ENCODE measurements at regions of chr14 and their contacts with region 1.

Region 1: GRCh38 chr14:75176142-75176820 is at the start of gene TMED10:
- DNase-seq: peak; percentile 87 to 95 (median 90)
- ATAC-seq: peak; percentile 95 to 97 (median 96)
- H3K4me3 ChIP-seq: peak within 1 kb of the TSS; percentile 70 to 99 (median 89)
- H3K27ac ChIP-seq: peak within 1 kb of the TSS; percentile 87 to 98 (median 96)
- H3K4me1 ChIP-seq: peaks cover 3 to 48% (median 25%) of the 10 kb centered on the region in 12 donors
- H3K27me3 ChIP-seq: no peaks in the 10 kb centered on the region
- CTCF ChIP-seq: peak in 2 of 12 donors; percentile 1 to 23
- POLR2A ChIP-seq: peak in 1 of 2 donors; percentile 36
- total RNA-seq, gene TMED10: 235 to 362 (median 275) TPM

Region 2: DNA sequence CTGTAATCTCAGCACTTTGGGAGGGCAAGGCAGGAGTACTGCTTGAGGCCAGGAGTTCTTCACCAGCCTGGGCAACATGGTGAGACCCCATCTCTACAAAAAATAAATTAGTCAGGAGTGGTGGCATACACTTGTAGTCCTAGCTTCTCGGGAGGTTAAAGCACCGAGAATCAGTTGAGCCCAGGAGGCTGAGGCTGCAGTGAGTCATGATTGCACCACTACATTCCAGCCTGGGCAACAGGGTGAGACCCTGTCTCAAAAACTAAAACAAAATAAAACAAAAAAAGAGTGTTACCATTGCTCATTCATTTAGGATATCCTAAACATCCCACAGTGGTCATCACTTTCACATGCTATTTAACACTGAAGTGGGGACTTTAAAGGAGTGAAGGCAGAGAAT is 57.2 kb before region 1 on chr14:
- intact Hi-C with region 1: no loop called
- DNase-seq: no peak
- ATAC-seq: no peak
- H3K4me3 ChIP-seq: no peak overlapping the region
- H3K27ac ChIP-seq: no peak overlapping the region
- H3K4me1 ChIP-seq: peaks cover 0 to 18% (median 1%) of the 10 kb centered on the region in 12 donors
- H3K27me3 ChIP-seq: no peaks in the 10 kb centered on the region
- CTCF ChIP-seq: no peak
- POLR2A ChIP-seq: no peak

Region 3: DNA sequence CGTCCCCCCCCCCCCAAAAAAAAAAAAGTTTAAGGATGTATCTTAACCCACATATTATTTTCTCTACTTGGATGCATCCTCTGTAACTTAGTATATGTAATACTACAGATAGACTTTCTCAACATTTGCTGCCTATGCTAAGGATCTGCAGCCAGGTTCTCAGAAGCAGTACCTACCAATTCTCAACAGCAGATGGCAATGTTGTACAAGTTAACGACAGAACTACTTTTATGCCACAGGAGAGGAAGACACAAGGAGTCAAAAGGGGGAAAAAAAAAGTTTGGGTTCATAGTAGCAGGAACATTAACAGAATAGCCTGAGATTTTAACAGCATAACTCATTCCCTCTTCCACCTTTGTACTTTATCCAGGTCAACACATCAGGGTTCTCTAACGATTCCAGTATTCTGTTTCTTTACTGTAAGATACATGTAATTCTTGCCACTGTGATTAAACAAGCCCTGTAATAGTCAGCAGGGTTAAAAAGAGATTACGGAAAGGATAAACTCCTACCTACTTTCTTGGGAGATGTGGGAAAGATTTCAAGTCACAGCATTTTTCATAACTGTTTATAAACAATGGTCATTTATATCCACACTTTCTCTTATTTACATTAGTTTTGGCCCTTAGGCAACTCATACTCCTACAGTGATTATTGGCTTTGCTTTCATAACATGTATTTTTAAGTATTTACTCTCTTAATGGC is 43.7 kb before region 1 on chr14:
- intact Hi-C with region 1: loop called in 3 of 10 experiments (anchors 5 kb)
- DNase-seq: peak in 2 of 5 donors; percentile 52 to 60
- ATAC-seq: peak in 3 of 4 donors; percentile 75 to 87 (median 81)
- H3K4me3 ChIP-seq: no peak overlapping the region
- H3K27ac ChIP-seq: peak overlapping the region in 3 of 12 donors; percentile 29 to 43 (median 33)
- H3K4me1 ChIP-seq: peaks cover 0 to 19% (median 11%) of the 10 kb centered on the region in 12 donors
- H3K27me3 ChIP-seq: no peaks in the 10 kb centered on the region
- CTCF ChIP-seq: peak; percentile 60 to 83 (median 71)
- POLR2A ChIP-seq: no peak

Region 4: GRCh38 chr14:75230140-75231045 is 54.1 kb after region 1 on chr14:
- intact Hi-C with region 1: loop called in 3 of 10 experiments (anchors 5 to 10 kb)
- DNase-seq: peak in 2 of 5 donors; percentile 39 to 76
- ATAC-seq: peak in 3 of 4 donors; percentile 25 to 34 (median 29)
- H3K4me3 ChIP-seq: no peak overlapping the region
- H3K27ac ChIP-seq: peak overlapping the region in 6 of 12 donors; percentile 6 to 62 (median 44)
- H3K4me1 ChIP-seq: peaks cover 0 to 61% (median 10%) of the 10 kb centered on the region in 12 donors
- H3K27me3 ChIP-seq: no peaks in the 10 kb centered on the region
- CTCF ChIP-seq: peak in 6 of 12 donors; percentile 4 to 30 (median 18)
- POLR2A ChIP-seq: no peak

Region 5: GRCh38 chr14:75258615-75259466 is 82.6 kb after region 1 on chr14:
- intact Hi-C with region 1: loop called in 3 of 10 experiments (anchors 2 to 5 kb)
- DNase-seq: peak; percentile 99 to 100 (median 100)
- ATAC-seq: peak; percentile 95 to 98 (median 97)
- H3K4me3 ChIP-seq: peak overlapping the region; percentile 11 to 61 (median 49)
- H3K27ac ChIP-seq: peak overlapping the region; percentile 87 to 98 (median 95)
- H3K4me1 ChIP-seq: peaks cover 0 to 40% (median 26%) of the 10 kb centered on the region in 12 donors
- H3K27me3 ChIP-seq: no peaks in the 10 kb centered on the region
- CTCF ChIP-seq: no peak
- POLR2A ChIP-seq: peak in 1 of 2 donors; percentile 72

Region 6: DNA sequence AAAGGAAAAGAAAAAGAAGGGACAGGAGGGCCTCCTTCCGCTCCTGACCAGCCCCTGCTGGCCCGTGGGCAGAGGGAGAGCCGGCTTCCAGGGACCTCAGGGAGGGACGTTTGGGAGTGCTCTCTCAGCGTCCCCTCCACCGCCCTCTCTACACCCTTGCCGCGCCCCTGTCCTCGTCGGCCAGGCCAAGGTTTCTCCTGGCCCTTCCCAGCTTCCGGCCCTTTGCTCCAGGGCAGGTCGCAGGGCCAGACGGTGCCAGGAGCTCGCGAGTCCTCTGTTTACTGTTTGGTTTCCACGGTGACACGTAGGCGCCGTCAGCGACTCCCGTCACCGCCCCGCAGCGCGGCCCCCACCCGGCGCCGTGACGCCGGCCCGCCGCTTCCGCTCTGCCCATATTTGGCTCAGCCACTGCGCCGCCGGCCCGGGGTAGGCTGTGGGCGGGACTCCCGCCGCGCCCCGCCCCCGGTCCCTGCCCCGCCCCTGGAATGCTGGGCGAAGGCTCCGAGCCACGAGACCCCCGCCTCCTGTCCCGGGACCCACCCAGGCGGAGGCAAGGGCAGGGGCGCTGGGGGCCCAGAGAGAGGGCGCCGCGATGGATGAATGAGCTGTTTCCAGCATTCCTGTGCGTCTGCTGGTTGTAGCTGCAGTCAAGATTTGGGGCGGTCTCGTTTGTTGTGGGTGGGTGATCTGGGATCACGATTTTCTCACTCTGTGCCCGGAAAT is 117.8 kb after region 1 on chr14:
- intact Hi-C with region 1: loop called in 3 of 10 experiments (anchors 1 to 5 kb)
- DNase-seq: peak; percentile 96 to 98 (median 97)
- ATAC-seq: peak; percentile 93 to 95 (median 93)
- H3K4me3 ChIP-seq: peak overlapping the region; percentile 43 to 77 (median 61)
- H3K27ac ChIP-seq: peak overlapping the region; percentile 76 to 98 (median 94)
- H3K4me1 ChIP-seq: peaks cover 0 to 53% (median 21%) of the 10 kb centered on the region in 12 donors
- H3K27me3 ChIP-seq: no peaks in the 10 kb centered on the region
- CTCF ChIP-seq: peak in 3 of 12 donors; percentile 6 to 26 (median 11)
- POLR2A ChIP-seq: peak; percentile 29 to 57